CD8-positive, alpha-beta T cell (primary cell): ENCODE measurements at regions of chr3 and their contacts with region 1.

Region 1: GRCh38 chr3:16048435-16049318 is 125.8 kb upstream of the GALNT15 start:
- DNase-seq: peak in 7 of 9 experiments; percentile 18 to 66 (median 28)
- ATAC-seq: peak; percentile 71
- H3K4me3 ChIP-seq: peak overlapping the region in 1 of 2 experiments; percentile 10
- H3K4me3 Mint-ChIP-seq: peak overlapping the region; percentile 37
- H3K27ac ChIP-seq: no peak overlapping the region
- H3K27ac Mint-ChIP-seq: no peak overlapping the region
- H3K4me1 ChIP-seq: no peaks in the 10 kb centered on the region
- H3K4me1 Mint-ChIP-seq: peaks cover 3% of the 10 kb centered on the region
- H3K27me3 ChIP-seq: peaks cover 0 to 3% of the 10 kb centered on the region in 2 experiments
- H3K27me3 Mint-ChIP-seq: peaks cover under 1% of the 10 kb centered on the region
- CTCF ChIP-seq: peak; percentile 73

Region 2: GRCh38 chr3:15815696-15816095 is 233.0 kb before region 1 on chr3:
- CTCF ChIA-PET with region 1: interaction called, 3 read pairs
- POLR2A ChIA-PET with region 1: no interaction called
- intact Hi-C with region 1: loop called (anchors 5 kb)
- DNase-seq: peak in 2 of 9 experiments; percentile 53 to 65
- ATAC-seq: no peak
- H3K4me3 ChIP-seq: no peak overlapping the region
- H3K4me3 Mint-ChIP-seq: no peak overlapping the region
- H3K27ac ChIP-seq: no peak overlapping the region
- H3K27ac Mint-ChIP-seq: no peak overlapping the region
- H3K4me1 ChIP-seq: peaks cover 10% of the 10 kb centered on the region
- H3K4me1 Mint-ChIP-seq: peaks cover 40% of the 10 kb centered on the region
- H3K27me3 ChIP-seq: no peaks in the 10 kb centered on the region
- H3K27me3 Mint-ChIP-seq: no peaks in the 10 kb centered on the region
- CTCF ChIP-seq: peak; percentile 46

Region 3: DNA sequence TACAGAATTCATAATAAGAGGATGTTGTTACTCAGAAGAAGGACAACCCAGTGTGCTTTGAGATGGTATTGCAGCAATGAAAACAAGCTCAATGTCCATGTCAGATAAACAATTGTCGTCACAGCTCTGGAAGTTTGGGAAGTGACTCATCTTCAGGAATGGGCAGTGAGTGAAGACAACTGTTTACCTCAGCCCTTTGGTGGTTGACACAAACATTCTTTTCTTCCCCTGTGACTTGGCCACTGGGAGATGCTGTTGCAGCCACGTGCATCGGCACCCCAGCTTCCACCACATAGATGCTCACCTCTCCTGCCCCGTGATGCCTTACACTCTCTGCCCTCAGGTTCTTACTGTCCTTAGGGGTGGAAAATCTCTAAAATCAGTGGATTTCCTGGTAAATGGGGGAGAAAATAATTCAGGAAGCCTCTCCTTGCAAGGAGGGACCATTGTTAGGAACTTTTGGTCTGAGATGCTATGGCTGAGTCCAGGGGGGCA is 11.7 kb after region 1 on chr3:
- CTCF ChIA-PET with region 1: interaction called, 18 read pairs
- POLR2A ChIA-PET with region 1: interaction called, 3 read pairs
- intact Hi-C with region 1: no loop called
- DNase-seq: no peak
- ATAC-seq: no peak
- H3K4me3 ChIP-seq: no peak overlapping the region
- H3K4me3 Mint-ChIP-seq: no peak overlapping the region
- H3K27ac ChIP-seq: no peak overlapping the region
- H3K27ac Mint-ChIP-seq: no peak overlapping the region
- H3K4me1 ChIP-seq: no peaks in the 10 kb centered on the region
- H3K4me1 Mint-ChIP-seq: no peaks in the 10 kb centered on the region
- H3K27me3 ChIP-seq: no peaks in the 10 kb centered on the region
- H3K27me3 Mint-ChIP-seq: peaks cover 8% of the 10 kb centered on the region
- CTCF ChIP-seq: no peak

Region 4: GRCh38 chr3:16247276-16248061 is 198.8 kb after region 1 on chr3:
- CTCF ChIA-PET with region 1: interaction called, 7 read pairs
- POLR2A ChIA-PET with region 1: no interaction called
- intact Hi-C with region 1: loop called (anchors 1 kb)
- DNase-seq: peak; percentile 54 to 86 (median 76)
- ATAC-seq: peak; percentile 90
- H3K4me3 ChIP-seq: no peak overlapping the region
- H3K4me3 Mint-ChIP-seq: no peak overlapping the region
- H3K27ac ChIP-seq: no peak overlapping the region
- H3K27ac Mint-ChIP-seq: no peak overlapping the region
- H3K4me1 ChIP-seq: no peaks in the 10 kb centered on the region
- H3K4me1 Mint-ChIP-seq: peaks cover 7% of the 10 kb centered on the region
- H3K27me3 ChIP-seq: no peaks in the 10 kb centered on the region
- H3K27me3 Mint-ChIP-seq: peaks cover 4% of the 10 kb centered on the region
- CTCF ChIP-seq: peak; percentile 79

Region 5: GRCh38 chr3:16550676-16551341 is 502.1 kb after region 1 on chr3:
- CTCF ChIA-PET with region 1: interaction called, 4 read pairs
- POLR2A ChIA-PET with region 1: no interaction called
- intact Hi-C with region 1: loop called in 1 of 2 experiments (anchors 1 kb)
- DNase-seq: peak; percentile 51 to 89 (median 73)
- ATAC-seq: peak; percentile 100
- H3K4me3 ChIP-seq: no peak overlapping the region
- H3K4me3 Mint-ChIP-seq: no peak overlapping the region
- H3K27ac ChIP-seq: no peak overlapping the region
- H3K27ac Mint-ChIP-seq: peak overlapping the region; percentile 60
- H3K4me1 ChIP-seq: no peaks in the 10 kb centered on the region
- H3K4me1 Mint-ChIP-seq: peaks cover 3% of the 10 kb centered on the region
- H3K27me3 ChIP-seq: no peaks in the 10 kb centered on the region
- H3K27me3 Mint-ChIP-seq: no peaks in the 10 kb centered on the region
- CTCF ChIP-seq: peak; percentile 87

Region 6: DNA sequence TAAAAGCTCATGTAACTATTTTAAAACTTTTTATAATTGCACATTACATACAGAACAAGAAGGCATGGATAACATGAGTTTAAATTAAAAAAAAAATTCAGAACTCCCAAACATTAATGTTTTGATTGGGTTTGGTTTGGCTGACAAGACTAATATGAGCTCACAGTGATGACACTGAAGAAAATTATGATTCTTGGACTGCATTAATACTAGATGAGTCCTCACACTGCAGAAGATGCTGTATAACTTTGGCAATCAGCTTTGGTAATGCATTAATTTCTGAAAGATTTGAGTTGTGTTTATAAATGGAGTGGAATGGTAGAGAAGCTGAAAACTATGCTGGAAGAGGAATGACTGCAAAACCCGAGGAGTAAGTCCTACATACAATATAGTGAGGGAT is 1194.9 kb after region 1 on chr3:
- CTCF ChIA-PET with region 1: no interaction called
- POLR2A ChIA-PET with region 1: no interaction called
- intact Hi-C with region 1: loop called in 1 of 2 experiments (anchors 10 kb)
- DNase-seq: no peak
- ATAC-seq: no peak
- H3K4me3 ChIP-seq: no peak overlapping the region
- H3K4me3 Mint-ChIP-seq: no peak overlapping the region
- H3K27ac ChIP-seq: no peak overlapping the region
- H3K27ac Mint-ChIP-seq: no peak overlapping the region
- H3K4me1 ChIP-seq: no peaks in the 10 kb centered on the region
- H3K4me1 Mint-ChIP-seq: no peaks in the 10 kb centered on the region
- H3K27me3 ChIP-seq: no peaks in the 10 kb centered on the region
- H3K27me3 Mint-ChIP-seq: no peaks in the 10 kb centered on the region
- CTCF ChIP-seq: no peak